OCI-LY7 (cell line): ENCODE measurements at regions of chr6 and their contacts with region 1.

Region 1: GRCh38 chr6:43013843-43014433 is at the starts of genes KLHDC3 and MEA1:
- DNase-seq: peak; percentile 100
- H3K4me3 ChIP-seq: peak within 1 kb of the TSS; percentile 86
- H3K27ac ChIP-seq: peak within 1 kb of the TSS; percentile 43
- H3K4me1 ChIP-seq: peaks cover 31% of the 10 kb centered on the region
- CTCF ChIP-seq: no peak
- total RNA-seq, gene KLHDC3: 78.6 and 89.9 TPM in 2 replicates
- total RNA-seq, gene MEA1: 70.7 and 76.0 TPM in 2 replicates

Region 2: GRCh38 chr6:42984001-42984923 is 29.7 kb before region 1 on chr6 and contains the start of gene PPP2R5D:
- CTCF ChIA-PET with region 1: interaction called, 3 read pairs
- POLR2A ChIA-PET with region 1: interaction called, 10 read pairs
- intact Hi-C with region 1: no loop called
- DNase-seq: peak; percentile 99
- H3K4me3 ChIP-seq: peak within 1 kb of the TSS; percentile 88
- H3K27ac ChIP-seq: peak within 1 kb of the TSS; percentile 35
- H3K4me1 ChIP-seq: peaks cover 24% of the 10 kb centered on the region
- CTCF ChIP-seq: no peak
- total RNA-seq, gene PPP2R5D: 29.1 and 35.0 TPM in 2 replicates

Region 3: GRCh38 chr6:43053545-43054205 is 39.7 kb after region 1 on chr6 and contains the start of gene CUL7:
- CTCF ChIA-PET with region 1: no interaction called
- POLR2A ChIA-PET with region 1: interaction called, 6 read pairs
- intact Hi-C with region 1: loop called (anchors 2 kb)
- DNase-seq: peak; percentile 89
- H3K4me3 ChIP-seq: peak within 1 kb of the TSS; percentile 77
- H3K27ac ChIP-seq: peak within 1 kb of the TSS; percentile 57
- H3K4me1 ChIP-seq: peaks cover 32% of the 10 kb centered on the region
- CTCF ChIP-seq: no peak
- total RNA-seq, gene CUL7: 14.1 and 16.9 TPM in 2 replicates

Region 4: GRCh38 chr6:43143235-43144124 is 129.5 kb after region 1 on chr6:
- CTCF ChIA-PET with region 1: interaction called, 4 read pairs
- POLR2A ChIA-PET with region 1: interaction called, 3 read pairs
- intact Hi-C with region 1: loop called (anchors 1 kb)
- DNase-seq: peak; percentile 81
- H3K4me3 ChIP-seq: no peak overlapping the region
- H3K27ac ChIP-seq: no peak overlapping the region
- H3K4me1 ChIP-seq: peaks cover 19% of the 10 kb centered on the region
- CTCF ChIP-seq: peak; percentile 96